ENCODE measurements at regions of chr20 and their contacts with region 1.

Region 1: DNA sequence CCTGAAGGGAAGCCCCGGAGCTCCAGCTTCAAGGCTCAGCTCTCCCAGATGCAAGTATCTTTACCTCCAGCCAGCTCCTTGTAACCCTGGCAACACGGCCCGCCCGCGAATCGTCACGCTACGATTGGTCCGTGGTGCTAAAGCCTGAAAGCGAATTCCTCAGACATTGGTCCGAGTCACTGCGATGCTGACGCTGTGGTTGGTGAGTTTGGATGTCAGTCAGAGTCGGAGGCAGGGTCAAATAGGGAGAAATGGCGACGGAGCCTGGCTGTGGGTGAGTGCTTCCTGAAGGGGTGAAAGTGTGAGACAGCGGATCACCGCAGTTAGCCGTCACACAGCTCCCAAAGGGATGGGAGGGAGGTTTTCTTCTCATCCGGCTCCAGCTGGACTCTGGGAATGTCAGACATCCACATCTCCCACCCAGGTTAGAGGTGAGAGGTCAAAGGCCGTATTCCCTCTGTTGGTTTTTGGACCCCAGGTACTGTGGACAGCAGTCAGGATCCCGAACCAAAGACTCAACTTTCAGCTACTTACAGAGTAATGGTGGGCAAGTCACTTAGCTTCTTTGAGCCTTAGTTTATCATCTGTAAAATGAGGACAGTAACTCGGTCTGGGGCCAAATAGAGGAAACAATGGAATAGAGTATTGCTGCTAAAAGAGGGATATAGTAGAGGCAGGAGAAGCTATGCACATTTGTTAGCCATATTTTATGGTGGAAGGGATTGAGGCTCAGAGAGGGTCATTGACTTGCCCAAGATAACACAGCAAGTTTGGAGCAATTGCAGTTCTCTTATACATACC is at the start of gene ZSWIM1:
- DNase-seq: peak; percentile 99
- ATAC-seq: peak; percentile 96
- total RNA-seq, gene ZSWIM1: 11.4 TPM

Region 2: GRCh38 chr20:45781391-45781931 is 99.7 kb before region 1 on chr20:
- intact Hi-C with region 1: no loop called
- DNase-seq: no peak
- ATAC-seq: no peak

Region 3: DNA sequence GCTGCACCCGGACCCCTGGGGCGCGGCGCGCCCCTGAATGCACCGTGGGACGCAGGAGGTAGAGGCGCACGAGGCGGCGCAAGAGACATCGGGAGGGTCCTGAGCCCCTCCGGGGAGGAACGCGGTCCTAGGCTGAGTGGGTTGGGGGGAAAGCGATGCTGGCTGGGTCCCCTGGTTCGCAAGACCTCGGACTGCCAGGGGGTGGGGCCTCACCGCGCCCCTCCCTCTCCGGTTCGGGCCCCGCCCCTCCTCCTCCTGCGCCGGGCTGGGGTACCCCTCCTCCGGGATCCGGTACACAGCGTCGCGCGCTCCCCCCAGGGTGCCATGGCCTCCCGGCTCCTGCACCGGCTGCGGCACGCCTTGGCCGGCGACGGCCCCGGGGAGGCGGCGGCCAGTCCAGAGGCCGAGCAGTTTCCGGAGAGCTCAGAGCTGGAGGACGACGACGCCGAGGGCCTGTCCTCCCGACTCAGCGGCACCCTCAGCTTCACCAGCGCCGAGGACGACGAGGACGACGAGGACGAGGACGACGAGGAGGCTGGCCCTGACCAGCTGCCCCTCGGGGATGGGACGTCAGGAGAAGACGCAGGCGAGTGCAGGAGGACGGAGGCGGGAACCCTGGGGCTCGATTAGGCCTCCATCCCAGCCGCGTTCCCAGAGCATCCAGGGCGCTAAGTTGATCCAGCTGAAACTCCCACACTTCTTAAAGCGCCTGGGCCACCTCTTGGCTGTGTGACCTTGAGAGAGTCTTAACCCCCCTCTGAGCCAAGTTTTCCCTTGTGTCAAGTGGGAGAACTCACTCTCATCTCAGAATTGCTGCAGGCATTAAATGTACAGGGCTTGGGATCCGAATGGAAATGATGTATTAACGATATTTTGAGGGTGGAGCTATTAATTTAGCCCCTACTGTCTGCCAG is 47.0 kb before region 1 on chr20:
- intact Hi-C with region 1: loop called (anchors 2 kb)
- DNase-seq: peak; percentile 87
- ATAC-seq: peak; percentile 82

Measured in Right ventricle myocardium inferior (tissue), 1 donor.